Caco-2 (cell line): ENCODE measurements at regions of chr16 and their contacts with region 1.

Region 1: DNA sequence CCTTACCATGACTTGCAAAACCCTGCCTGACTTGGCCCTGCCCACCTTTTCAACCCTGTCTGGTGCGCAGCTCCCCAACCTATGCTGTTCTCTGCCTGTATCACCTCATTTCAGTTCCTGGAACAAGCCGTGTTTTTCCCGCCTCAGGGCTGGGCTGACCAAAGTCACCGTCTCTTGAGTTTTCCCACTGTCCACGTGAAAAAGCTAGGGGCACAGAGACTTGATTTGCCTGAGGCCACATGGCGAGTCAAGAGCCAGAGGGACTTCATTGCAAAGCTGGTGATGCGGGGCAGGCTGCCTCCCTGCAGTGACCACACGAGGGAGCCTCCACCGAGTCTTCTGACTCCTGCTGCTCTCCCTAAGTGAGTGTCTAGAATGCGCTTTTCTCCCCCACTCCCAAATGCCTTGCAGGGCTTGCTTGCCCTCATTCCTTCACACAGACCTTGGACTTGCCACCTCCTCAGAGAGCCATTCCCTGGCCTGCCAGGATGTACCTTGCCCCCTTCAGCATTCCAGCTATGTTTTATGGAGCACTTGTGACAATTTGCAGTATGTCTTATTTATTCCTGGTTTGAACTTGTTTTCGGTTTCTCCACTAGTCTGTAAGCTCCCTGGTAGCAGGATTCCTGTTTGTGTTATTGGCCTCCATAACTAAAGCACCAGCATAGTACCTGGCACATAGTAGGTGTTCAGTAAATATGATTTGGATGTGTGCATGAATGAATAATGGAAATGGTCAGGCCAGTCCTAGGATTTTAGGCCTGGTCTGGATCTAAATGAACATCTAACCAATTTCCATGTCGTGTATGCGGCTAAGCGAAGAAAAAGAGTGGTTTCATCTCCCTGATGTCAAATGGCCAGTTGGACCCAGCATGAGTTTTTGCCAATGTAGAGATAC is 252.3 kb downstream of the SNX29 start:
- DNase-seq: peak; percentile 88 to 93
- H3K4me3 ChIP-seq: no peak overlapping the region
- H3K4me3 Mint-ChIP-seq: no peak overlapping the region
- H3K27ac Mint-ChIP-seq: peak overlapping the region; percentile 87
- H3K4me1 ChIP-seq: peaks cover 25% of the 10 kb centered on the region
- H3K4me1 Mint-ChIP-seq: peaks cover 26% of the 10 kb centered on the region
- H3K27me3 ChIP-seq: no peaks in the 10 kb centered on the region
- H3K27me3 Mint-ChIP-seq: no peaks in the 10 kb centered on the region
- CTCF ChIP-seq: peak; percentile 68 to 85

Region 2: GRCh38 chr16:12132290-12132689 is 96.6 kb before region 1 on chr16:
- CTCF ChIA-PET with region 1: no interaction called
- POLR2A ChIA-PET with region 1: no interaction called
- intact Hi-C with region 1: no loop called
- DNase-seq: no peak
- H3K4me3 ChIP-seq: no peak overlapping the region
- H3K4me3 Mint-ChIP-seq: no peak overlapping the region
- H3K27ac Mint-ChIP-seq: no peak overlapping the region
- H3K4me1 ChIP-seq: no peaks in the 10 kb centered on the region
- H3K4me1 Mint-ChIP-seq: no peaks in the 10 kb centered on the region
- H3K27me3 ChIP-seq: no peaks in the 10 kb centered on the region
- H3K27me3 Mint-ChIP-seq: no peaks in the 10 kb centered on the region
- CTCF ChIP-seq: no peak

Region 3: GRCh38 chr16:12178251-12178990 is 50.4 kb before region 1 on chr16:
- CTCF ChIA-PET with region 1: interaction called, 3 read pairs
- POLR2A ChIA-PET with region 1: no interaction called
- intact Hi-C with region 1: loop called (anchors 2 kb)
- DNase-seq: no peak
- H3K4me3 ChIP-seq: no peak overlapping the region
- H3K4me3 Mint-ChIP-seq: no peak overlapping the region
- H3K27ac Mint-ChIP-seq: no peak overlapping the region
- H3K4me1 ChIP-seq: no peaks in the 10 kb centered on the region
- H3K4me1 Mint-ChIP-seq: no peaks in the 10 kb centered on the region
- H3K27me3 ChIP-seq: no peaks in the 10 kb centered on the region
- H3K27me3 Mint-ChIP-seq: no peaks in the 10 kb centered on the region
- CTCF ChIP-seq: no peak

Region 4: GRCh38 chr16:12193031-12193430 is 35.8 kb before region 1 on chr16:
- CTCF ChIA-PET with region 1: no interaction called
- POLR2A ChIA-PET with region 1: no interaction called
- intact Hi-C with region 1: no loop called
- DNase-seq: no peak
- H3K4me3 ChIP-seq: no peak overlapping the region
- H3K4me3 Mint-ChIP-seq: no peak overlapping the region
- H3K27ac Mint-ChIP-seq: no peak overlapping the region
- H3K4me1 ChIP-seq: no peaks in the 10 kb centered on the region
- H3K4me1 Mint-ChIP-seq: no peaks in the 10 kb centered on the region
- H3K27me3 ChIP-seq: no peaks in the 10 kb centered on the region
- H3K27me3 Mint-ChIP-seq: peaks cover 3% of the 10 kb centered on the region
- CTCF ChIP-seq: no peak

Region 5: DNA sequence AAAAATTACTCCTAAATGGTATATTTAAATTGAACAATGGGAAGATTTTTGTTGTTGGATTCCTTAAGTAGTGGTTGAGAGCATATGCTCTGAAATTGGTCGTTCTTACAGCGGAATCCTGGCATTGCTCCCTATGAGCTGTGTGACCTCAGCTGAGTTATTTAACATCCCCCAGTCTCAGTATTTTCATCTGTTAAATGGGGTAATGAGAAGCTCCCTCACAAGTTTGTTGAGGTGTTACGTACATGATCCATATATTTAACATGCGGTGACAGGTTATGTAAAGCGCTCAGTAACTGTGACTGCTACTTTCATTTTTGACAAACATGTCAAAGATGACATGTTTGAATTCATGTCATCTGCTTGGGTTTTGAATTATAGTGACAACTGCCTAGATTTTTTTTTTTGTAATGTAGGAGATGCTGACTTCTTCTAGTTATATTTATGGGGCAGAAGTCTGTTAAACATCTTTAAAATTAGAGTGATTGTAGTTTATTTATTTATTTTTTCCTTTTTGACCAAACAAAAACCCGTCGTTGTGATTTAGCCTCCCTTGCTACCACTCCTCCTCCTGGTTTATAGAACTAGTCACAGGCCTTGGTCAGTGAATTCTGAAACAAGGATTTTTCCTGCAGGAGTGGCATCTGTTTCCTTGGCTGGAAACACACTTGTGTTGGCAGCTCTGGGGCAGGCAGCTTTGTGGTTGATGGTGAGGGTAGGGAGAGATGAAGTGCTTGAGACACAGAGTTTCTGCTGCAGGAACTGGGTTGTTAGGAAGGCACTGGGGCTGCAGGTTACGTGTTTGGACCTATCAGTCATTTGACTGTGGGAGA is 16.5 kb after region 1 on chr16:
- CTCF ChIA-PET with region 1: no interaction called
- POLR2A ChIA-PET with region 1: no interaction called
- intact Hi-C with region 1: no loop called
- DNase-seq: no peak
- H3K4me3 ChIP-seq: no peak overlapping the region
- H3K4me3 Mint-ChIP-seq: no peak overlapping the region
- H3K27ac Mint-ChIP-seq: no peak overlapping the region
- H3K4me1 ChIP-seq: no peaks in the 10 kb centered on the region
- H3K4me1 Mint-ChIP-seq: no peaks in the 10 kb centered on the region
- H3K27me3 ChIP-seq: no peaks in the 10 kb centered on the region
- H3K27me3 Mint-ChIP-seq: no peaks in the 10 kb centered on the region
- CTCF ChIP-seq: no peak

Region 6: DNA sequence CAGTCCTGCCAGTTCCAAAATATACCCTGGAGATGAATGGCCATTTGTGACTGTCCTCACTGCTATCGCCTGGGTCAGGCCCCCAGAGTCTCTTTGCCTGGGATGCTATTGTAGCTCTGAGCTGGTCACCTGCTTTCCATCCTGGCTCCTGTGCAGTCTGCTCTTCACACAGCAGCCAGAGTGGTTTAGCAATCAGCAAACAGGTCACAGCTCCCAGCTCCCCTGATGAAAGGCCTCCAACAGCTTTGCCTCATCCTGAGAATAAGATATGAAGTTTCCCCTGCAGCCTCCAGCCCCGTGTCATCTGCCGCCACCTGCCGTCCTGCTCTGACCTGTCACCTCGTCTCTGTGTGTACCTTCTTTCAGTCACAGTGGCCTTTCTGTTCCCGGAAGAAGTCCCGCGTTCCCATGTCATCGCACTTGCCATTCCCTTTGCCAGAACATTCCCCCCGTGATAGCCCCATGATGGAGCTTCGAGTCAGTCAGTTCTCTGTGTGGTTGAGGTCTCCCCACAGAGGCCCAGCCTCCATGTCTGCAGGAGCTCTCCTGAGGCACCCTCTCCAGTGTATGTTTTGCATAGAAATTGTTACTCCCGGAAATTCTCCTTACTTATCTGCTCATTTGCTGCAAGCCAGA is 29.2 kb after region 1 on chr16:
- CTCF ChIA-PET with region 1: interaction called, 87 read pairs
- POLR2A ChIA-PET with region 1: interaction called, 4 read pairs
- intact Hi-C with region 1: loop called (anchors 1 kb)
- DNase-seq: peak; percentile 85
- H3K4me3 ChIP-seq: no peak overlapping the region
- H3K4me3 Mint-ChIP-seq: no peak overlapping the region
- H3K27ac Mint-ChIP-seq: peak overlapping the region; percentile 18
- H3K4me1 ChIP-seq: peaks cover 10% of the 10 kb centered on the region; the same call in 1 of the 2 replicates
- H3K4me1 Mint-ChIP-seq: peaks cover 27% of the 10 kb centered on the region
- H3K27me3 ChIP-seq: no peaks in the 10 kb centered on the region
- H3K27me3 Mint-ChIP-seq: no peaks in the 10 kb centered on the region
- CTCF ChIP-seq: peak; percentile 37 to 81

Region 7: GRCh38 chr16:12503191-12503590 is 274.3 kb after region 1 on chr16:
- CTCF ChIA-PET with region 1: interaction called, 10 read pairs
- POLR2A ChIA-PET with region 1: no interaction called
- intact Hi-C with region 1: no loop called
- DNase-seq: peak in 1 of 2 experiments; percentile 14
- H3K4me3 ChIP-seq: no peak overlapping the region
- H3K4me3 Mint-ChIP-seq: no peak overlapping the region
- H3K27ac Mint-ChIP-seq: no peak overlapping the region
- H3K4me1 ChIP-seq: peaks cover 11% of the 10 kb centered on the region; the same call in 1 of the 2 replicates
- H3K4me1 Mint-ChIP-seq: peaks cover 12% of the 10 kb centered on the region
- H3K27me3 ChIP-seq: no peaks in the 10 kb centered on the region
- H3K27me3 Mint-ChIP-seq: no peaks in the 10 kb centered on the region
- CTCF ChIP-seq: peak in 1 of 2 experiments; percentile 24